Endothelial cell of umbilical vein (primary cell): ENCODE measurements at regions of chrX and their contacts with region 1.

Region 1: GRCh38 chrX:68828740-68829552 is at the start of gene EFNB1:
- DNase-seq: peak; percentile 95
- H3K4me3 ChIP-seq: peak within 1 kb of the TSS; percentile 49 to 59 (median 50)
- H3K27ac ChIP-seq: no peak within 1 kb of the TSS
- H3K4me1 ChIP-seq: peaks cover 10% of the 10 kb centered on the region
- H3K27me3 ChIP-seq: peaks cover 0 to 2% of the 10 kb centered on the region in 2 experiments
- CTCF ChIP-seq: no peak
- POLR2A ChIP-seq: peak; percentile 88
- total RNA-seq, gene EFNB1: 8.8 and 13.3 TPM in 2 replicates

Region 2: GRCh38 chrX:68345025-68345424 is 483.9 kb before region 1 on chrX:
- CTCF ChIA-PET with region 1: no interaction called
- POLR2A ChIA-PET with region 1: no interaction called
- dilution Hi-C with region 1: no loop called
- intact Hi-C with region 1: no loop called
- DNase-seq: peak; percentile 3
- H3K4me3 ChIP-seq: no peak overlapping the region
- H3K27ac ChIP-seq: no peak overlapping the region
- H3K4me1 ChIP-seq: no peaks in the 10 kb centered on the region
- H3K27me3 ChIP-seq: no peaks in the 10 kb centered on the region
- CTCF ChIP-seq: no peak
- POLR2A ChIP-seq: no peak

Region 3: DNA sequence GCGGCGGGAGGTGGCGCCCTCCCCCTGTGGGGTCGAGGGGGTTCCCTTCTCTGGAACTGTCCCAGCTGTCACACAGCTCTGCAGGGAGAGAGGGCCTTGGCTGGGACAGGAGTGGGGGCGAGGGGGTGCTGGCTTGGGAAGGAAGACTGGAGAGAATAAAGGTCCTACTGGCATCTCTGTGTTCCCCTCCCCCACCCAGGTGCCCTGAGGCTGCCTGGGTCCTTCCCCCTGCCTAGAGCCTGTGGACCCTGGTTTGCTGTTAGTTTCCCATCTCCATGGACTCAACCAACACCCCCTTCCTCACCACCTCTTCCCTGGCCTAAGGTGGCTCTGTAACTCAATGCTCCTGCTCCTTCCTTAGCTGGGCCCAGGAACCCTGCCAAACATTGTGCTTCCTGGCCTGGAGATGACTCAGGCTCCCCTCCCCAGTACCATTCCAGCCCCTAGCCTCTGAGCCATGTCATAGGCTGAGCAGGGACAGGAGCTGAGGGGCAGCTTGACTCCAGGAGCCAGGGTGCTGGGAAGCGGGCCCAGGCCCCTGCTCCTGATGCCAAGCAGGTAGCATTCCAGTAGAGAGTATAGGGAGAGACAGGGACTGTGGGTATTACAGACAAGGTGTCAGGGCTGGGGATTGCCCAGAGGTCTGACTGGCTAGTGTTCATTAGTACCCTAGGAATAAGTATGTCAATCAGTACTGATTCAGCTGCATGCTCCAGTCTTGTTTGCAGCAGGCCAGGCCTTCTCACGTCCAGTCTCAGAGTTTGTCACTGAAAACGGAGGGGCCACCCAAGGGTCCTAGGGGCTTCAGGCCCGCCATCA is 100.6 kb after region 1 on chrX:
- CTCF ChIA-PET with region 1: interaction called, 7 read pairs
- POLR2A ChIA-PET with region 1: interaction called, 9 read pairs
- dilution Hi-C with region 1: no loop called
- intact Hi-C with region 1: loop called (anchors 5 kb)
- DNase-seq: peak; percentile 57
- H3K4me3 ChIP-seq: no peak overlapping the region
- H3K27ac ChIP-seq: peak overlapping the region; percentile 41
- H3K4me1 ChIP-seq: peaks cover 28% of the 10 kb centered on the region
- H3K27me3 ChIP-seq: no peaks in the 10 kb centered on the region
- CTCF ChIP-seq: no peak
- POLR2A ChIP-seq: no peak

Region 4: DNA sequence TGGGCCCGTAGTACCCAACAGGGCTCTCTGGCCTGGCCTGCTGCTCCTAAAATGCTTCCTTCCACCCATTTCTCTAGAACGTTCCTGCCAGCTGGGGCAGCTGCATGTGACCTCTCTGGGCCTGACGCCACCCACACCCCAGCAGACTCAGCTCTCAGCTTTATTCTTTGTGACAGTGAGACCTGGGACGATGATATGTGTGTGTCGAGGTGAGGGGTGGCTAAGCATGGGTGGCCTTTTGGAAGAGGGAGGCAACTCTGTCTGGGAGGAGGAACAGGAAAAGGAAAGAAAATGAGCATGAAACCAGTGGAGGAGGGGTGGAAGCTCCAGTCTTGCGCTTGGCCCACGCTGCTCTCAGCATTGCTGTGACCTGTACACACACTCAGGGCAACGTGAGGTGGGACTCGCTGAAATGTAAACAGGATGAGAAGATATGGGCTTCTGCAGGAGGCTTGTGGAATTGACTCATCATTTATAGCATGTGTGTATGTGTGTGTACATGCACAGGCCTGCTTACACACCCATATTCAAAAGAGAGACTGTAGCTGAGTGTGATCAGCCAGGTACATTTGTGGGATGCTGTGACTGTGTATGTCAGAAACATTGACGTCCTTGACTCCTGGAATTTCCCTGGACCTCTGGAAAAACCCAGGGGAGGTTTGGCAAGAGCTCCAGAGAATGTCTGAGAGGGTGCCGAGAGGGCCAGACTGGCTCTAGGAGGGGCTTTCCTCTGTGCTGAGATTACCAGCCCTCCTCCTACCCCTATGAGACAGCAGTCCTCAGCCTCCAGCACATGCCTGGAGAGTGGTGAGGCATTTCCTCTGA is 198.4 kb after region 1 on chrX:
- CTCF ChIA-PET with region 1: interaction called, 36 read pairs
- POLR2A ChIA-PET with region 1: interaction called, 12 read pairs
- dilution Hi-C with region 1: no loop called
- intact Hi-C with region 1: loop called (anchors 1 kb)
- DNase-seq: peak; percentile 55
- H3K4me3 ChIP-seq: no peak overlapping the region
- H3K27ac ChIP-seq: peak overlapping the region; percentile 41
- H3K4me1 ChIP-seq: peaks cover 15% of the 10 kb centered on the region
- H3K27me3 ChIP-seq: no peaks in the 10 kb centered on the region
- CTCF ChIP-seq: no peak
- POLR2A ChIP-seq: no peak

Region 5: GRCh38 chrX:69133921-69134542 is 305.1 kb after region 1 on chrX:
- CTCF ChIA-PET with region 1: no interaction called
- POLR2A ChIA-PET with region 1: interaction called, 3 read pairs
- dilution Hi-C with region 1: no loop called
- intact Hi-C with region 1: loop called (anchors 1 kb)
- DNase-seq: peak; percentile 30
- H3K4me3 ChIP-seq: no peak overlapping the region
- H3K27ac ChIP-seq: no peak overlapping the region
- H3K4me1 ChIP-seq: no peaks in the 10 kb centered on the region
- H3K27me3 ChIP-seq: peaks cover 2 to 14% of the 10 kb centered on the region in 2 experiments
- CTCF ChIP-seq: peak; percentile 25 to 49
- POLR2A ChIP-seq: no peak

Region 6: GRCh38 chrX:69222103-69223090 is 393.5 kb after region 1 on chrX:
- CTCF ChIA-PET with region 1: interaction called, 144 read pairs
- POLR2A ChIA-PET with region 1: interaction called, 6 read pairs
- dilution Hi-C with region 1: no loop called
- intact Hi-C with region 1: loop called (anchors 1 kb)
- DNase-seq: peak; percentile 39
- H3K4me3 ChIP-seq: no peak overlapping the region
- H3K27ac ChIP-seq: no peak overlapping the region
- H3K4me1 ChIP-seq: no peaks in the 10 kb centered on the region
- H3K27me3 ChIP-seq: no peaks in the 10 kb centered on the region
- CTCF ChIP-seq: peak; percentile 61 to 76
- POLR2A ChIP-seq: no peak

Region 7: GRCh38 chrX:69387567-69388487 is 558.9 kb after region 1 on chrX:
- CTCF ChIA-PET with region 1: interaction called, 12 read pairs
- POLR2A ChIA-PET with region 1: no interaction called
- dilution Hi-C with region 1: no loop called
- intact Hi-C with region 1: loop called (anchors 5 kb)
- DNase-seq: peak; percentile 11
- H3K4me3 ChIP-seq: no peak overlapping the region
- H3K27ac ChIP-seq: no peak overlapping the region
- H3K4me1 ChIP-seq: no peaks in the 10 kb centered on the region
- H3K27me3 ChIP-seq: no peaks in the 10 kb centered on the region
- CTCF ChIP-seq: peak; percentile 23 to 53
- POLR2A ChIP-seq: no peak